PC-3 (cell line): ENCODE measurements at regions of chr20 and their contacts with region 1.

Region 1: GRCh38 chr20:12947691-12948090 is 61.1 kb upstream of the SPTLC3 start:
- DNase-seq: peak; percentile 51
- ATAC-seq: peak; percentile 92
- H3K4me3 ChIP-seq: no peak overlapping the region
- H3K27ac ChIP-seq: no peak overlapping the region
- H3K4me1 ChIP-seq: peaks cover 21% of the 10 kb centered on the region
- H3K27me3 ChIP-seq: no peaks in the 10 kb centered on the region
- CTCF ChIP-seq: no peak

Region 2: DNA sequence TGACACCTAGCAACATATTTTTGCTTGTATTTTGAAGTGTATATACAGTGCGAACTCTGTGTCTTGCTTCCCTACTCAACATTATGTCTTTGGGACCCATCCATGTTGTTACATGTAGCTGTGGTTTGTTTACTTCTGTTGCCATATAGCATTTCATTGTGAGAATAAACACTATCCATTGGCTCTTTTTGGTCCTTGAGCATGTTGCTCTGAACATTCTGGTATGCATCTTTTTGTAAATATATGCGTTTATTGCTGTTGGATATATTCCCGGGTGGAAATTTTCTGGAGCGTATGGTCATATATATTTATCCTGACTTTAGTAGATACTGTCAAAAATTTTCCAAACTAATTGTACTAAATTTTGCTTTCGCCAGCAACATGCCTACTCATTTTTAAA is 161.4 kb before region 1 on chr20:
- CTCF ChIA-PET with region 1: no interaction called
- POLR2A ChIA-PET with region 1: no interaction called
- intact Hi-C with region 1: no loop called
- DNase-seq: no peak
- ATAC-seq: no peak
- H3K4me3 ChIP-seq: no peak overlapping the region
- H3K27ac ChIP-seq: no peak overlapping the region
- H3K4me1 ChIP-seq: no peaks in the 10 kb centered on the region
- H3K27me3 ChIP-seq: peaks cover 76% of the 10 kb centered on the region
- CTCF ChIP-seq: no peak

Region 3: DNA sequence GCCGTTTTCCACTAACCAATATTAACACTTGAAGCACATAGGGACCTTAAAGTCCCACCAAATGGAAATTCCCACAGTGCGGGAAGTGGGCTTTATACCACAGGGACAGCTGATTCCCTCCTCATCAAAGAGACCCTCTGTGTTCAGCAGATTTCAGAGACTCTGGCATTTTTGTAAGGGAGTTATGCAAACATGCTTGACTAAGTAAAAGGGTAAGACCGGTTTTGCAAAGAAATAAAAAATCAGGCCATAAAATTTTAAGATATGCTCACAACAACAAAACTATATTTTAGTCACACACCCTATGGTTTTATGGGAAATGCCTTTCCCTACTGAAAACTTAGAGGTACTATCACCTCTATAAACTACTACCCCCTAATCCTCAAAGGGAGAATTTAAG is 15.7 kb after region 1 on chr20:
- CTCF ChIA-PET with region 1: interaction called, 3 read pairs
- POLR2A ChIA-PET with region 1: no interaction called
- intact Hi-C with region 1: loop called (anchors 2 kb)
- DNase-seq: peak; percentile 74
- ATAC-seq: peak; percentile 48
- H3K4me3 ChIP-seq: peak overlapping the region; percentile 34
- H3K27ac ChIP-seq: peak overlapping the region; percentile 74
- H3K4me1 ChIP-seq: peaks cover 46% of the 10 kb centered on the region
- H3K27me3 ChIP-seq: no peaks in the 10 kb centered on the region
- CTCF ChIP-seq: no peak

Region 4: DNA sequence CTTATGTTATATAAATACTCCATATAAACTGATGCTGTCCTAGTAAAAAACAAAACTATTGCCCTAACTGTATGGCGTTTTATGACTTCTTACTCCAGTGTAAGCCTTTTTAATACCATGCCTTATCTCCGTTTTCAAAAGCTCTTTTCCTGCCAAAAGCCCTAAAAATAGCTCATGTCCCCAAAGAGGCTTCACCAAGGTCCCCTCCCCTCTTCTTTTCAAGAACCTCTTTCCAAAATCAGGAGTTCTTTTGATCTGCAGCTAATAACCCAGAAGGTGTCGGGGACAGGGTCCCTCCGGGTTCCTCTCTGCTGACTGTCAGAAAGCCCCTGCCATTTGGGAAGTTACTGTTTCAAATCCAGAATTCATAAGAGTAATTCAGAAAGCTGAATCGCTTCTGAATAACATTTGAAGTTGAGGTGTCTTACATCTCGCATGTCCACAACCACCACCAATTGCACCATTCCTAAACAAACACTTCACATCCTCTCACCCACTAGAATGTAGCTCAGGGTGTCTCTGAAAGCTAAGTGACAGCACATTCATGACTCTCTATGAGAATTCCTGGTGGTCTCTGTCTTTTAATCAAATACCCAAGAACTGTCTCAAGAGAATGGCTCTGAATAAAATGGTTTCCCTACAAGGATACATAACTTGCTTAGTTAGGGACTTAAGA is 677.8 kb after region 1 on chr20:
- CTCF ChIA-PET with region 1: no interaction called
- POLR2A ChIA-PET with region 1: no interaction called
- intact Hi-C with region 1: no loop called
- DNase-seq: no peak
- ATAC-seq: no peak
- H3K4me3 ChIP-seq: no peak overlapping the region
- H3K27ac ChIP-seq: no peak overlapping the region
- H3K4me1 ChIP-seq: no peaks in the 10 kb centered on the region
- H3K27me3 ChIP-seq: no peaks in the 10 kb centered on the region
- CTCF ChIP-seq: no peak